Activated B cell treated with CpG ODN at 0.5 μM for 24 hours (primary cell): ENCODE measurements at regions of chr18 and their contacts with region 1.

Region 1: GRCh38 chr18:25351777-25352628 is at the start of gene ZNF521:
- DNase-seq: peak; percentile 46
- ATAC-seq: peak; percentile 90
- H3K4me3 Mint-ChIP-seq: peak within 1 kb of the TSS; percentile 83
- H3K27ac Mint-ChIP-seq: peak within 1 kb of the TSS; percentile 42
- H3K4me1 Mint-ChIP-seq: peaks cover 23% of the 10 kb centered on the region
- H3K27me3 Mint-ChIP-seq: peaks cover 39% of the 10 kb centered on the region
- CTCF ChIP-seq: no peak
- total RNA-seq, gene ZNF521: 0.16 and 0.61 TPM in 2 replicates

Region 2: DNA sequence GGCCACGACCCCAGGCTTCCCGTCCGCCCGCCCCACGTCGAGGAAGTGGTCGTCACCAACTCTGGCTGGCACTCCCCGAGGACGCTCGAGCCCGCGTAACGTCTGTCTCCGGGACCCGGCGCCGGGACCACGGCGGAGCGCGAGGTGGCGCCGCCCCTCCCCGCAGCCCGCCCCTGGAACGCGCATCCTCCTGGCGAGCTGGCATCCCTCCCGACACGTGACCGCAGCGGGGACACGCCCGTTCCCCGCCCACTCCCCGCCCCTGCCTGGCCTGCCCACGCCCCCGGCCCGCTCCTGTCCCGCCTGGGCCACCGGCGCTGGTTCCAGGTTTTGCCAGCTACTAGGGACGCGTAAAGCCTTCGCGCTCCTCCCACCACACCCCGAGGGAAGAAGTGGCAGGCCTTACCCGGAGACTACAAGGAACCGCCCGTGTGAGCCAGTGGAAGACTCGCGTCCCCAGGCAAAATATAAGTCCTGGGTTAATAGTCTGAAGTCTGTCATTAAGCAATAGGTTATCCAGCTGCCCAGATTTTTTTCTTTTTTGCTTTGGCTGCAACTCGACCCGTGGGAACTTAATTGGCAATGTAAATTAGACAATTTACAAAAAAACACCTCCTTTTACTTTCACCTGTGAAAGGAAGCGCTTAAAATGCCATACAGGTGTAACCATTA is 954.2 kb before region 1 on chr18 and contains the start of gene OSBPL1A:
- CTCF ChIA-PET with region 1: no interaction called
- POLR2A ChIA-PET with region 1: no interaction called
- intact Hi-C with region 1: loop called (anchors 5 kb)
- DNase-seq: no peak
- ATAC-seq: peak; percentile 89
- H3K4me3 Mint-ChIP-seq: peak within 1 kb of the TSS; percentile 86
- H3K27ac Mint-ChIP-seq: no peak within 1 kb of the TSS
- H3K4me1 Mint-ChIP-seq: peaks cover 16% of the 10 kb centered on the region
- H3K27me3 Mint-ChIP-seq: peaks cover 33% of the 10 kb centered on the region
- CTCF ChIP-seq: no peak
- total RNA-seq, gene OSBPL1A: 0.80 and 0.81 TPM in 2 replicates

Region 3: GRCh38 chr18:24923138-24923537 is 428.9 kb before region 1 on chr18:
- CTCF ChIA-PET with region 1: no interaction called
- POLR2A ChIA-PET with region 1: no interaction called
- intact Hi-C with region 1: loop called (anchors 1 kb)
- DNase-seq: no peak
- ATAC-seq: peak; percentile 76
- H3K4me3 Mint-ChIP-seq: peak overlapping the region; percentile 66
- H3K27ac Mint-ChIP-seq: peak overlapping the region; percentile 71
- H3K4me1 Mint-ChIP-seq: peaks cover 73% of the 10 kb centered on the region
- H3K27me3 Mint-ChIP-seq: no peaks in the 10 kb centered on the region
- CTCF ChIP-seq: no peak

Region 4: DNA sequence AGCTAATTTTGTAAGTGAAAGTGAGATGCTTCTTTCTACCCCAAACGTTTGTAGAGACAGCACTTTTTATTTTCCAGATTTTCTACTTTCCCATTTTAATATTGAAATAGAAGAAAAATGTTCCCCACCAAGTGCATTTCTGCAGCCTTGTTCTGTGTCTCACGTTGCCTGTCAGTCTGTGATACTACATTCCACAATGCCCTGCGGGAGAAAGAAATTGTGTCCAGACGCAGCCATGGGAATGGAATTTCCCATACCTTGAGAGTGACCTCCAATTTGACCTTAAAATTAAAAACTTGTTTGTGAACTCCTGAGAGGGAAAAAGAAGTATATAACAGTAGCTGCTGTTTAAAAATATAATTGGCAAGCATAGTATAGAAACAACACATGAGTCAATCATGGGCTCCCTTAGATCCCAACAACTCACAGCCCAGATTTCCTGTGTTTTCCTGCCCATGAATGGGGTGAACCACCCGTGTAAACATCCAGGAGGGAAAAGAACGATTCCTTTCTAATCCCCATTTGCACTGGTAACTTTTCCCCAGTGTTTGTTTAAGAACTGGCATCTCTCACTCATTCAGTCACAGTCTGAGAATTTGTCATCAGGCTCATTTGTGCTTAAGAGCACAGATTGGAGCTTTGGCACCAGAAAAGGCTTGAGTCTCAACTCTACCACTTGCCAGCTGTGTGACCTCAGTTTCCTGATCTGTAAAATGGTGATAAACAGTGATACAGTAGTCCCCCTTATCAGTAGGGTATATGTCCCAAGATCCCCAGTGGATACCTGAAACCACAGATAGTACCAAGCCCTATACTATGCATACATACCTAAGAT is 166.1 kb after region 1 on chr18:
- CTCF ChIA-PET with region 1: no interaction called
- POLR2A ChIA-PET with region 1: no interaction called
- intact Hi-C with region 1: loop called (anchors 5 kb)
- DNase-seq: no peak
- ATAC-seq: peak; percentile 39
- H3K4me3 Mint-ChIP-seq: no peak overlapping the region
- H3K27ac Mint-ChIP-seq: peak overlapping the region; percentile 69
- H3K4me1 Mint-ChIP-seq: peaks cover 34% of the 10 kb centered on the region
- H3K27me3 Mint-ChIP-seq: no peaks in the 10 kb centered on the region
- CTCF ChIP-seq: no peak

Region 5: GRCh38 chr18:26548429-26549262 is 1196.6 kb after region 1 on chr18 and contains the start of gene KCTD1:
- CTCF ChIA-PET with region 1: no interaction called
- POLR2A ChIA-PET with region 1: no interaction called
- intact Hi-C with region 1: loop called (anchors 10 kb)
- DNase-seq: peak; percentile 56
- ATAC-seq: peak; percentile 73
- H3K4me3 Mint-ChIP-seq: peak within 1 kb of the TSS; percentile 89
- H3K27ac Mint-ChIP-seq: no peak within 1 kb of the TSS
- H3K4me1 Mint-ChIP-seq: peaks cover 47% of the 10 kb centered on the region
- H3K27me3 Mint-ChIP-seq: peaks cover 21% of the 10 kb centered on the region
- CTCF ChIP-seq: no peak
- total RNA-seq, gene KCTD1: 3.7 and 4.9 TPM in 2 replicates